PC-9 (cell line): ENCODE measurements at regions of chr10 and their contacts with region 1.

Region 1: DNA sequence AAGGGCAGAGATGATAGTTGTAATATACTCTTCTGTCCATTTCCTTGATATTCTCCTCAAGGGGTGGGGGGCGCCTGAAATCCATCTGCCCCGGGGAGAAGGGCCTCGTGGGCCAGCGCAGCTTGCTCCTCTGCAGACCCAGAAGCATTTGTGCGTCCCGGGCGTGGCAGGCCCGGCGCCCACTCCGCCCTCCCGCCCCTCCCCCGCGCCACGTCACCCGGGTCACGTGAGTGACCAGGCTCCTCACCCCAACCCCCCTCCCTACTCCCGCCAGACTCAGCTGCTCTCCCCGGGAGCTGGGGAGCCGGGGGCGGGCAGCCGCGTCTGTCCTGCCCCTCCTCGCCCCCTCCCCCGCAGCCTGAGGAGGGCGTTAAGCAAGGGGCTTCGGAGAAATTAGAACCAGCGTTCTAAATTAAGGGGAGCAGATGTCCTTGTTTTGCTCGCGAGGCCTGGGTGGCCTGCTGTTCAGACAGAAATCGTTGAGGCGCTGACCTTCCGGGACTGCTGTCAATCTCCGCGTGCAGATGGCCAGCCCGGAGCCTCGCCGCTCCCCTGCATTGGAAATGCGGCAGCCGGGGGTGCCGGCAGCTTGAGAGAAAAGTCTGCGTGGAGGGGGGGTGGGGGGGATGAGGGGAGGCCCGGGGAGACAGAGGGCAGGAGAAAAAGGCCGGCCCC is 102.1 kb upstream of the ZNF438 start:
- DNase-seq: peak in 1 of 2 experiments; percentile 53
- H3K4me3 ChIP-seq: peak overlapping the region; percentile 56; the same call in 1 of the 2 replicates
- H3K27ac ChIP-seq: peak overlapping the region; percentile 79
- H3K4me1 ChIP-seq: peaks cover 30% of the 10 kb centered on the region
- H3K27me3 ChIP-seq: no peaks in the 10 kb centered on the region
- CTCF ChIP-seq: no peak

Region 2: DNA sequence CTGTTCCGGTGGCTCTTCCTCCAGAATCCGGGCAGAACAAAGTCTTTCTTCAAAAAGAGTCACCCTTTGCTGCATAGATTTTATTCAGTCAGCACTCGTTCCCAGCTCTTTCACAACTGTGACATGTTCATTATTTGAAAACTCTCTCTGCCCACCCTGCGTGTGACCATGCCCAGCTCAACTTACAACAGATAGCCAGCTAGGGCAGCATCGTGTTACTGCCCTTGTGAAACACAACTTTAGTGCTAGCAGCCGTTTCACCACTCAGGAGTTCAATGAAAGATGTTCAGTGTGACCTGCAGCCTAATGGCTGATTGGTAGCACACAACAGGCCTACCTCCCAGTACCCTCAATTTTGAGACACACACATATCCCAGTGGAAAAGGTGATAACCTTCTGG is 160.0 kb before region 1 on chr10:
- CTCF ChIA-PET with region 1: no interaction called
- POLR2A ChIA-PET with region 1: interaction called, 32 read pairs
- intact Hi-C with region 1: no loop called
- DNase-seq: no peak
- H3K4me3 ChIP-seq: no peak overlapping the region
- H3K27ac ChIP-seq: no peak overlapping the region
- H3K4me1 ChIP-seq: no peaks in the 10 kb centered on the region
- H3K27me3 ChIP-seq: no peaks in the 10 kb centered on the region
- CTCF ChIP-seq: no peak

Region 3: DNA sequence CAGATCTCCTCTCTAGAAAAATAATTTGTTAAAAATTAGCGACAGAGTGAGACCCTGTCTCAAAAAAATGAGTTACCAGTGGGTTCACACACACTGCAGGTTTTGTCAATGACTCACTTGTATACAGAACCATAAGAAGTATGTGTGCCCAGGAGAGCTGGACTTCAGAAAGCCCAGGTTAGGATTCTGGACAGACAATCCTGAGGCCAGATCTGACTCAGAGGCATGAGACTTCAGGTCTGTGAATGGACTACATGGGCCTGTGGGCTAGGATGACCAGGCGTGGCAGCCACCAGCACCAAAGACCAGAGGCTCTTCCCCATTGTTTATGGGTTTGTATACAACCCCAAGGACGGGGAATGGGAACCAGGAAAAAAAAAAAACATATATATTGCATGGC is 92.8 kb before region 1 on chr10:
- CTCF ChIA-PET with region 1: no interaction called
- POLR2A ChIA-PET with region 1: no interaction called
- intact Hi-C with region 1: no loop called
- DNase-seq: no peak
- H3K4me3 ChIP-seq: no peak overlapping the region
- H3K27ac ChIP-seq: no peak overlapping the region
- H3K4me1 ChIP-seq: no peaks in the 10 kb centered on the region
- H3K27me3 ChIP-seq: no peaks in the 10 kb centered on the region
- CTCF ChIP-seq: no peak

Region 4: DNA sequence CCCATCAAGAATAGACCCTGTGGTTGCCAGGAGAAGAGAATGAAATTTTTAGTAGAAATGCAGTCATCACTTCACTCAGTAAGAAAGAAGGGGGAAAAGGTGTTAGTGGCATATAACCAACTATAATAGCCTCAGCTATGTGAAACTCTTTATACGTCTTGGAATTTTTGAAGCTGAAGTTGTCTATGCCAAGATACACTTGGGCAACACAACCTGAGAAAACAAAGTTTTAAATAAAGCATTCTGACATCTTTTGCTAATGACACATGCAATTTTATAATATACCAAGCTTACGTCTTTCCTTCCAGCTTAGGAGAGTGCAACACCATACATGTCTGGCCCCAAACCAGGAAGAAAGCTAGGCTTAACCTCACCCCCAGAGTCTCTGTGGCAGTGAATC is 61.3 kb before region 1 on chr10:
- CTCF ChIA-PET with region 1: no interaction called
- POLR2A ChIA-PET with region 1: no interaction called
- intact Hi-C with region 1: no loop called
- DNase-seq: no peak
- H3K4me3 ChIP-seq: no peak overlapping the region
- H3K27ac ChIP-seq: no peak overlapping the region
- H3K4me1 ChIP-seq: peaks cover 30% of the 10 kb centered on the region
- H3K27me3 ChIP-seq: no peaks in the 10 kb centered on the region
- CTCF ChIP-seq: no peak

Region 5: GRCh38 chr10:31083765-31084184 is 50.0 kb before region 1 on chr10:
- CTCF ChIA-PET with region 1: no interaction called
- POLR2A ChIA-PET with region 1: interaction called, 10 read pairs
- intact Hi-C with region 1: no loop called
- DNase-seq: peak in 1 of 2 experiments; percentile 44
- H3K4me3 ChIP-seq: no peak overlapping the region
- H3K27ac ChIP-seq: no peak overlapping the region
- H3K4me1 ChIP-seq: no peaks in the 10 kb centered on the region
- H3K27me3 ChIP-seq: no peaks in the 10 kb centered on the region
- CTCF ChIP-seq: peak; percentile 59

Region 6: GRCh38 chr10:31099664-31100063 is 34.1 kb before region 1 on chr10:
- CTCF ChIA-PET with region 1: no interaction called
- POLR2A ChIA-PET with region 1: no interaction called
- intact Hi-C with region 1: loop called (anchors 2 kb)
- DNase-seq: peak; percentile 84 to 89
- H3K4me3 ChIP-seq: no peak overlapping the region; the same call in 1 of the 2 replicates
- H3K27ac ChIP-seq: peak overlapping the region; percentile 87
- H3K4me1 ChIP-seq: peaks cover 30% of the 10 kb centered on the region
- H3K27me3 ChIP-seq: no peaks in the 10 kb centered on the region
- CTCF ChIP-seq: no peak

Region 7: DNA sequence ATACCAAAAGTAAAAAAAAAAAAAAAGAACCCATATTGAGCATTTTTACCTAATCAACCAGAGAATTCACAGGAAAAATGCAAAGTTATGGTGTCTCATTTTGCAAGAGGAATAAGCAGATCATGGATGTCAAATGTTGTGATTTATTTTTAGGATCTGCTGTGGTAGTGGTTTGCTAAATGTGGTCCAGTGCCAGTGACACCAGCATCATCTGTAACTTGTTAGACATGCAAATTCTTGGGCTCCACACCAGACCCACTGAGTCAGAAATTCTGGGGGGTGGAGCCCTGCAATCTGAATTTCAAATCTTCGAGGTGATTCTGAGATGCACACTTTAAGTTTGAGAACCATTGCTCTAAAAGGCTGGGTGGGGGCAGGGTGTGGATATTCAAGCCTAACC is 155.2 kb after region 1 on chr10:
- CTCF ChIA-PET with region 1: no interaction called
- POLR2A ChIA-PET with region 1: no interaction called
- intact Hi-C with region 1: no loop called
- DNase-seq: no peak
- H3K4me3 ChIP-seq: no peak overlapping the region
- H3K27ac ChIP-seq: no peak overlapping the region
- H3K4me1 ChIP-seq: no peaks in the 10 kb centered on the region
- H3K27me3 ChIP-seq: no peaks in the 10 kb centered on the region
- CTCF ChIP-seq: no peak

Region 8: DNA sequence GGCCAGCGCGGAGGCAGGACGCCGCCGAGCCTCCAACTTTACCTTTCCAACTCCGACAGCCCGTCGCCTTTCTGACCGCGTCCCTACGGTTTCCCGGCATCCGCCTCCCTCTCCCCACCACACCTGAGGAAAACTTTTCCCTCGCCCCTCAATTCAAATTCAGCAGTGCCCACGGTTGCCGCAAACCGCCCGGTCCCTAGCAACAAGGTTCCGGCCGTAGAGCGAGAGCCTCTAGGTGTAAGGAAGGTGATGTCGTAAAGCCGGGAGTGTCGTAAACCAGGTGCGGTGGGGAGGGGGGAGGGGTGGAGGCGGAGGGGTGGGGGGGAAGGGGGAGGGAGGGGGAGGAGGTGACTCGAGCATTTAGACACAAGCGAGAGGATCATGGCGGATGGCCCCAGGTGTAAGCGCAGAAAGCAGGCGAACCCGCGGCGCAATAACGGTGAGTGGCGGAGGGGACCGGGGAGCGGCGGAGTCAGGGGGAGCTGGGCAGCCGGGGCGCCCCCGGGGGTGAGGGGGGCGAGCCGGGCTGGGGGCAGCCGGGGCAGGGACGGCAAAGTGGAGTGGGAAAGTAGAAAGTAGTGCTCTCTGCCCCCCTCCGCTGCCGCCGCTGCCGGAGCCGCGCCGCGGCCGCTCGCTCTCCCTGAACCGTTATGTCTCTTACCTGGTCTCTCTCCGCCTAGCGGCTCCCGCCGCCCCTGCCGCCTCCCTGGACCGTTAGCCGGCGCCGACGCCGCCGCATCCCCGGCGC is 185.3 kb after region 1 on chr10 and contains the start of gene ZEB1:
- CTCF ChIA-PET with region 1: no interaction called
- POLR2A ChIA-PET with region 1: no interaction called
- intact Hi-C with region 1: loop called (anchors 1 kb)
- DNase-seq: peak; percentile 66 to 77
- H3K4me3 ChIP-seq: peak within 1 kb of the TSS; percentile 84
- H3K27ac ChIP-seq: peak within 1 kb of the TSS; percentile 65
- H3K4me1 ChIP-seq: no peaks in the 10 kb centered on the region; the same call in 1 of the 2 replicates
- H3K27me3 ChIP-seq: 0 out of 2 replicates have a peak, but pooled peaks cover 4% of the 10 kb centered on the region
- CTCF ChIP-seq: no peak
- total RNA-seq, gene ZEB1: 1.0 and 1.4 TPM in 2 replicates